A549 (cell line): ENCODE measurements at regions of chr4 and their contacts with region 1.

Region 1: GRCh38 chr4:77819843-77820648 is 878 bp upstream of the CNOT6L start:
- DNase-seq: peak; percentile 59 to 82
- ATAC-seq: peak; percentile 73 to 87
- H3K4me3 ChIP-seq: peak overlapping the region; percentile 81
- H3K27ac ChIP-seq: peak overlapping the region; percentile 95 to 96
- H3K4me1 ChIP-seq: peaks cover 10% of the 10 kb centered on the region; the same call in 2 of the 3 replicates
- CTCF ChIP-seq: no peak
- EP300 ChIP-seq: no peak
- POLR2A ChIP-seq: peak; percentile 46
- RAD21 ChIP-seq: no peak

Region 2: GRCh38 chr4:77734928-77735327 is 85.1 kb before region 1 on chr4:
- CTCF ChIA-PET with region 1: no interaction called
- POLR2A ChIA-PET with region 1: no interaction called
- DNase-seq: no peak
- ATAC-seq: no peak
- H3K4me3 ChIP-seq: no peak overlapping the region
- H3K27ac ChIP-seq: no peak overlapping the region
- H3K4me1 ChIP-seq: no peaks in the 10 kb centered on the region
- CTCF ChIP-seq: no peak
- EP300 ChIP-seq: no peak
- POLR2A ChIP-seq: no peak
- RAD21 ChIP-seq: no peak

Region 3: GRCh38 chr4:77862478-77863216 is 42.6 kb after region 1 on chr4 and contains the start of gene MRPL1:
- CTCF ChIA-PET with region 1: interaction called, 7 read pairs
- POLR2A ChIA-PET with region 1: interaction called, 33 read pairs
- DNase-seq: peak; percentile 74 to 95
- ATAC-seq: peak; percentile 96 to 97
- H3K4me3 ChIP-seq: peak within 1 kb of the TSS; percentile 75
- H3K27ac ChIP-seq: peak within 1 kb of the TSS; percentile 90 to 92
- H3K4me1 ChIP-seq: peaks cover 4% of the 10 kb centered on the region; the same call in 1 of the 3 replicates
- CTCF ChIP-seq: no peak
- EP300 ChIP-seq: no peak
- POLR2A ChIP-seq: peak; percentile 89
- RAD21 ChIP-seq: 0 out of 5 replicates have a peak, but pooled peaks of 1 of the 2 experiments have one; percentile 25
- polyA plus RNA-seq, gene MRPL1: 35.8 and 62.3 TPM in 2 replicates